PC-3 (cell line): ENCODE measurements at regions of chr12 and their contacts with region 1.

Region 1: GRCh38 chr12:63849641-63850040 is 5.1 kb downstream of the SRGAP1 start:
- DNase-seq: no peak
- ATAC-seq: no peak
- H3K4me3 ChIP-seq: no peak overlapping the region
- H3K27ac ChIP-seq: no peak overlapping the region
- H3K4me1 ChIP-seq: peaks cover 27% of the 10 kb centered on the region
- H3K27me3 ChIP-seq: no peaks in the 10 kb centered on the region
- CTCF ChIP-seq: no peak

Region 2: DNA sequence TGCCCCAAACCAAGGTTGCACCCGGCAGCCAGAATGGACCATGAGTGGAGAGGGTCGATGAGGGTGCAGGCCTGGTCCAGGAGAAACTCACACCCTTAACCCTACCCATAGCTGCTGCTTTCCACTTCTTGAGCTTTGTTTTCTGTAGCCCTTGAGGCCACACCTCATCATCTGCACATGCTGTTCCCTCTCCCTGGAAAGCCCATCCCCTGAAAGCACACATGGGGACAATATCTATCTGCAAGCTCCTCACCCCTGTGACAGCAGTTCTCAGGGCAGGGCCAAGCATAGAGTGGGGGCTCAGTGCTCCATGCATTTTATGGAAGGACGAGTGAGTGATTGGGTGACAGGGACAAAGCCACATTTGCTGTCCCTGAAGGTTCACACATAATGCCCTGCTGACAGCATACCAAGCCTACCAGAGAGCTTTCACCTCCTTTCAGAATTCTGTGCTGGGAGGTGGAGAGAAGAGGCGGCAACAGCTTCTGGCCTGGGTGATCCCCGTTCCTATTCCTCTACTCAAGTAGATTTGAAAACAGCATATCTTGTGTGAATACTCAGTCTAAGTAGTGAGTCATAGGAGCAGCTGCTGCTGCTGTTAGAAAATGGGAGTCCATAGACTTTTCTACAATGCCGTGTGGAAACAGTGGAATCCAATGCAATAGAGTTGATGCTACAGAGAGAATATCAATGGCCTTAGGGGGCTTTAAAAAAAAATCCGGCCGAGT is 39.4 kb after region 1 on chr12:
- CTCF ChIA-PET with region 1: no interaction called
- POLR2A ChIA-PET with region 1: interaction called, 13 read pairs
- intact Hi-C with region 1: no loop called
- DNase-seq: no peak
- ATAC-seq: peak; percentile 18; the same call in 1 of the 2 replicates
- H3K4me3 ChIP-seq: no peak overlapping the region
- H3K27ac ChIP-seq: no peak overlapping the region
- H3K4me1 ChIP-seq: 0 out of 2 replicates have a peak, but pooled peaks cover 5% of the 10 kb centered on the region
- H3K27me3 ChIP-seq: no peaks in the 10 kb centered on the region
- CTCF ChIP-seq: no peak

Region 3: GRCh38 chr12:63989301-63989845 is 139.7 kb after region 1 on chr12:
- CTCF ChIA-PET with region 1: no interaction called
- POLR2A ChIA-PET with region 1: no interaction called
- intact Hi-C with region 1: no loop called
- DNase-seq: no peak
- ATAC-seq: no peak
- H3K4me3 ChIP-seq: no peak overlapping the region
- H3K27ac ChIP-seq: no peak overlapping the region
- H3K4me1 ChIP-seq: no peaks in the 10 kb centered on the region
- H3K27me3 ChIP-seq: no peaks in the 10 kb centered on the region
- CTCF ChIP-seq: no peak